ENCODE measurements at regions of chr20 and their contacts with region 1.

Region 1: DNA sequence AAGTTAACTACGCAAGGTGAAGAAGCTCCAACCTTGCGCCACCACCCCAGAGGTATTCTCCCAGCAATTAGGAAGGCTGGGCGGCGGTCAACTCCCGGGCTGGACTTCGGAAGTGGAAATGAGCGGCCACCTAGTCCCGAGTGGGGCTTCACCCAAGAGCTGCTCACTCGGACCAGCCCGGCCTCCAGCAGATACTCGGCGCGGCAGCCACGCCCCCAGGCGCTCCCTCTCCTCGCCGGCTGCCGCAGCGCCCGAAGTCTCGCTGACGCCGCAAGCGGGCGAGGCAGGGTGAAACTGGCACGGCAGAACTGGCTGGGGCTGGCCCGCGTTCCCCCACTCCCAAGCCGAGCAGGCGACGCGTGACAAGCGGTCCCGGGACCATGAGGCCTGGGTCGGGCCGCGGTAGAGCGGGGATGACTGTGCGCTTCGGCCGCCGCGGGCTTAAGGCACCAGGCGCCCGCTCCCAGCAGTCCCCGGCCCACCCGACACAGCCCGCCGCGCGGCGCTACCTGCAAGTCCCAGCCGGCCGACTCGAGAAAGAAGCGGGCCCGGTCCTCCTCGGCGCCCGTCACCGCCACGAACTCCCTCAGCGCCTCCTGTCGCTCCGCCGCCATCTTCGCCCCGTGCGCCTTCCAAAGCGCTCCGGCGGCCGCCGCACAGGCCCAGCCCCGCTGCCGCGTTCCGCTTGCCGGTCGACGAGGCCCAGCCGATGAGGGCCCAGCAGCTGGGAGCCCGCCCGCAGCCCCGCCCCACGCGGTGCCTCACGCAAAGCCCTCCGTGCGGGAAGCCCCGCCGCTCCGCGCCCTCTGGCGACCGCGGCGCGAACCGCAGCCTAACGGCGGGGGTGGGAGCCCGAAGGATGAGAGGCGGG is at the start of gene NSFL1C:
- DNase-seq: peak; percentile 94
- H3K4me3 ChIP-seq: peak within 1 kb of the TSS; percentile 99
- H3K27ac ChIP-seq: peak within 1 kb of the TSS; percentile 92
- H3K4me1 ChIP-seq: peaks cover 27% of the 10 kb centered on the region
- H3K27me3 ChIP-seq: no peaks in the 10 kb centered on the region
- CTCF ChIP-seq: peak; percentile 98
- total RNA-seq, gene NSFL1C: 67.4 to 76.0 TPM

Region 2: GRCh38 chr20:1263853-1264252 is 202.6 kb before region 1 on chr20:
- intact Hi-C with region 1: no loop called
- DNase-seq: no peak
- H3K4me3 ChIP-seq: no peak overlapping the region
- H3K27ac ChIP-seq: no peak overlapping the region
- H3K4me1 ChIP-seq: no peaks in the 10 kb centered on the region
- H3K27me3 ChIP-seq: no peaks in the 10 kb centered on the region
- CTCF ChIP-seq: no peak

Region 3: GRCh38 chr20:1325173-1326030 is 141.0 kb before region 1 on chr20:
- intact Hi-C with region 1: loop called (anchors 5 kb)
- DNase-seq: peak; percentile 98
- H3K4me3 ChIP-seq: peak overlapping the region; percentile 70
- H3K27ac ChIP-seq: peak overlapping the region; percentile 97
- H3K4me1 ChIP-seq: peaks cover 2% of the 10 kb centered on the region
- H3K27me3 ChIP-seq: no peaks in the 10 kb centered on the region
- CTCF ChIP-seq: no peak

Region 4: DNA sequence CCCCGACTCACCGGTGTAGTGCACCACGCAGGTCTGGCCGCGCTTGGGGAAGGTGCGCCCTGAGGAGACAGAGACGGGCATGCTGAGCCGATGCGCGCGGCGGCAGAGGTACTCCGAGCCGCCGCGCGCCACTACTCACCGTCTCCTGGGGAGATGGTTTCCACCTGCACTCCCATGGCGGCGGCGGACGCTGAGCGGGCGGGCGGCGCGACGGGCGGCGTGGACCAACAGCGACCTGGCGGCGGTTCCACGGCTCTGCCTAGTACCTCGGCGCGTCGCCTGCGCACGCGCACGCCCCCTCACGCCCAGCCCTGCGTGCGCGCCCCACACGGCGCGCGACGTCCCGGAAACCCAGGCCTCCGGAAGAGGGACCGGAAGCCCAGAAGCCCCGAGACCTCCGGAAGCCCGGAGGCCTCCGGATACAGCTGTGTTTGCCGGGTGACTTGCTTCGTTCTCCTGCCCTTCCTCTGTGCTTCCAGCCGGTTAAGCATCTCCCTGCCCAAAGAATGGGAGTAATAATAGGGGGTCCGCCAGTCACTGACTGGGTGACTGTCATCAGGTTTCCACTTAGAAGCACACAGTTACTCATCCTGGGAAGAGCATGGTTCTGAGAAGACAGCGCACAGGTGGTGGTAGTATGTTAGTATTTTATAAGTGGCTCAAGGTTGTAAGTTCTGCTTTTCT is 73.5 kb before region 1 on chr20 and contains the start of gene FKBP1A:
- intact Hi-C with region 1: loop called (anchors 10 kb)
- DNase-seq: peak; percentile 93
- H3K4me3 ChIP-seq: peak within 1 kb of the TSS; percentile 81
- H3K27ac ChIP-seq: peak within 1 kb of the TSS; percentile 79
- H3K4me1 ChIP-seq: peaks cover 14% of the 10 kb centered on the region
- H3K27me3 ChIP-seq: no peaks in the 10 kb centered on the region
- CTCF ChIP-seq: peak; percentile 17
- total RNA-seq, gene FKBP1A: 307 to 310 TPM

Region 5: GRCh38 chr20:3032624-3033023 is 1566.2 kb after region 1 on chr20:
- intact Hi-C with region 1: loop called (anchors 10 kb)
- DNase-seq: no peak
- H3K4me3 ChIP-seq: no peak overlapping the region
- H3K27ac ChIP-seq: no peak overlapping the region
- H3K4me1 ChIP-seq: no peaks in the 10 kb centered on the region
- H3K27me3 ChIP-seq: no peaks in the 10 kb centered on the region
- CTCF ChIP-seq: no peak